ENCODE measurements at regions of chr4 and their contacts with region 1.

Region 1: DNA sequence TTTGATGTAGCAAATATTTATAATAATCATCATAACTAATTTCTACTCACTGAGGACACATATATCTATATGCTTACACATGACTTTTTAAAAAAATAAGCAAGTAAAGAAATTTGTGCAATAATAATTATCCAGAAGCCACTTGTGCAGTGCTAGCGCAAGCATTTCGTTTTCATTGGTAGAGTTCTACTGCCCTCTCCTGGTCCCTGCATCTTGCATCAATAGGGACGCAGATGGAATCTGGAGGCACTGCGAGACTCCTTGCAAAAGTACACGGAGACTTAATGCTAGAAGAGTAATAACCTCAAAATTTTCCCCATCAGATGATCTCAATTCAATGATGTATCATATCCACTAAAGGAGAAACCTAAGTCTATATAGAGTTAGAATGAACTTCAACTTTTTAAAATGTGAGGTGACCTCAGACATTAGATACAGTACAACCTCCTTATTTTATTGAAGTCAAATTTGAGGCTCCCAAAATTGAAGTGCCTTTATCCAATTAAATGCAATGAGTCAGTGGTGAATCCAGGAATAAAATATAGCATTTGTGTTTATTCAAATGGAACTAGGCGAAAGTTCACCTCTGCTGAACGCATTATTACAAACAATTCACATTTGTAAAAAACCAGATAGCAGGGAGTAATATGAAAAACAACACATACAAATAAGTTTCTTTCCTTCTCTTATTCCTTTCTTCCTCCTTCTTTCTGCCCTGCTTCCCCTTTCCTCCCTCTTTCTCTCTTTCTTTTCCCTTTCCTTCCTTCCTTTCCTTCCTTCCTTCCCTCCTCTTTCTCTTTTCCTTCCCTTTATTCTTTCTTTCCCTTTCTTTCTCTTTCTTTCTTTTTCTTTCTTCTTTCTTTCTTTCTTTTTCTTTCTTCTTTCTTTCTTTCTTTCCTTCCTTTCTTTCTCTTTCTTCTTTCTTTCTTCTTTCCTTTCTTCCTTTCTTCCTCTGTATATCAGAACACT is 450.0 kb downstream of the ANKRD50 start:
- DNase-seq: peak; percentile 11
- ATAC-seq: peak; percentile 88
- H3K4me3 ChIP-seq: no peak overlapping the region
- H3K27ac ChIP-seq: no peak overlapping the region
- H3K4me1 ChIP-seq: no peaks in the 10 kb centered on the region
- H3K27me3 ChIP-seq: no peaks in the 10 kb centered on the region
- CTCF ChIP-seq: peak; percentile 69 to 82 (median 74)
- EP300 ChIP-seq: no peak
- POLR2A ChIP-seq: no peak
- RAD21 ChIP-seq: peak; percentile 90

Region 2: GRCh38 chr4:123380728-123381716 is 881.5 kb before region 1 on chr4:
- CTCF ChIA-PET with region 1: no interaction called
- POLR2A ChIA-PET with region 1: no interaction called
- RAD21 ChIA-PET with region 1: no interaction called
- SMC1A ChIA-PET with region 1: no interaction called
- in situ Hi-C with region 1: loop called (anchors 10 kb)
- intact Hi-C with region 1: loop called (anchors 10 kb)
- DNase-seq: no peak
- ATAC-seq: peak; percentile 88
- H3K4me3 ChIP-seq: no peak overlapping the region
- H3K27ac ChIP-seq: no peak overlapping the region
- H3K4me1 ChIP-seq: no peaks in the 10 kb centered on the region; the same call in 1 of the 2 replicates
- H3K27me3 ChIP-seq: no peaks in the 10 kb centered on the region; a peak in 2 of 4 replicates
- CTCF ChIP-seq: no peak
- EP300 ChIP-seq: no peak
- POLR2A ChIP-seq: no peak
- RAD21 ChIP-seq: no peak

Region 3: DNA sequence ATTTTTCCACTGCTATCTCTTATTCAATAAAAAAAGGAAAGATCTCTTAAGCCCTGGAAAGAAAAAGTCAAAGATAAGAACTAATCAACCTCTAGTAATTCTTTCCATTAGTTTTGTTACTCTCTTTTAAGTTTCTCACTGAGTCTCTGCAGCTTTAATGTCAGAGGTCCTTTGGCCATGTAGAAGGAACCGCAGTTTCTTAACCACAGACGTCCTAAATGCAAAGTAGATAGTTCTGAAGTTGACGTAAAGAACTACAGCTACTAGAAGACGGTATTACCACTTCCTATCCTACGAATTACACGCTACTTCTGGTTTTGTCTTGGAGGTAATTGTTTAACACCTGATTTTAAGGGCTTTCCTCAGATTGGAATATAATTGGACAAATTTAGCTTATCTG is 124.2 kb after region 1 on chr4:
- CTCF ChIA-PET with region 1: no interaction called
- POLR2A ChIA-PET with region 1: no interaction called
- RAD21 ChIA-PET with region 1: no interaction called
- SMC1A ChIA-PET with region 1: no interaction called
- in situ Hi-C with region 1: no loop called
- intact Hi-C with region 1: no loop called
- DNase-seq: no peak
- ATAC-seq: peak; percentile 76
- H3K4me3 ChIP-seq: no peak overlapping the region
- H3K27ac ChIP-seq: no peak overlapping the region
- H3K4me1 ChIP-seq: no peaks in the 10 kb centered on the region
- H3K27me3 ChIP-seq: no peaks in the 10 kb centered on the region
- CTCF ChIP-seq: no peak
- EP300 ChIP-seq: no peak
- POLR2A ChIP-seq: no peak
- RAD21 ChIP-seq: no peak